Dorsolateral prefrontal cortex (tissue), 120 donors: ENCODE measurements at regions of chr18 and their contacts with region 1.

Region 1: GRCh38 chr18:74546751-74547550 is 12.7 kb downstream of the CNDP1 start:
- DNase-seq: no peak
- H3K4me3 ChIP-seq: no peak overlapping the region
- H3K27ac ChIP-seq: peak overlapping the region in 54 of 59 donors; percentile 26 to 96 (median 73)
- H3K27me3 ChIP-seq: no peaks in the 10 kb centered on the region
- CTCF ChIP-seq: no peak

Region 2: GRCh38 chr18:74196220-74197119 is 350.5 kb before region 1 on chr18:
- intact Hi-C with region 1: loop called (anchors 5 to 10 kb)
- DNase-seq: peak in 3 of 10 donors; percentile 50 to 54 (median 50)
- H3K4me3 ChIP-seq: peak overlapping the region in 41 of 59 donors; percentile 1 to 58 (median 35)
- H3K27ac ChIP-seq: peak overlapping the region in 1 of 59 donors; percentile 29
- H3K27me3 ChIP-seq: no peaks in the 10 kb centered on the region
- CTCF ChIP-seq: peak; percentile 82 to 99 (median 93)

Region 3: DNA sequence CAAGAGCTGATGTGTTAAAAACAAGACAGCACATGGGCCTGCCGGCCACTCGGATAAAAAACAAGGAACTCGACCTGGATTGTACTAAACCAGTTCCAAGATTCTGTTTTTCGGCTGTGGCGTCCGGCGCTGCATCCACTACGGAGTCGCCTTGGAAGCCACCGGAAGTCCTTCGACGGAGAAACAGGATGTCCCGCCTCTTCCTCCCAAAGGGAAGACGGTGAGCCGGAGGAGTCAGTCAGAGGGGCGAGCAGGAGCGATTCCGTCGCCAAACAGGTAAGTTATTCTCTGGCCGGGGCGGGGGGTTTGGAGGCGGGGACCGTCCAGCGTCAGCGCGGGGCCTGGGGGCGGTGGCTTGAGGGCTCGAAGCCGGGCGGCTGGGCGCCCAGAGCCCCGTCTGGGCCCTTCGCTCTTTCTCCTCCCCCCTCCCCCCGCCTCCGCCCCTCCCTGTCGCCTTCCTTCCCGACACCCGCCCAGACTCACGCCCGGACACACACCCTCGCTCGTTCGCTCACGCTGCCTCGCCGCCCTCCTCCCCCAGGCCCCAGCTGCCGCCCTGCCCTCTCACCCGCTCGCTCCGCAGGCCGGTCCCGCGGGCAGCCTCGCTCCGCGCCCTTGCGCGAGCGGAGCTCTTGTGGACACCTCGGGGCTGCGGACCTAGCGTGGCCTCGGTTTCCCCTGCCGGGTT is 50.9 kb after region 1 on chr18 and contains the start of gene ZNF407:
- intact Hi-C with region 1: no loop called
- DNase-seq: peak; percentile 73 to 91 (median 83)
- H3K4me3 ChIP-seq: peak within 1 kb of the TSS; percentile 70 to 100 (median 94)
- H3K27ac ChIP-seq: peak within 1 kb of the TSS; percentile 83 to 100 (median 99)
- H3K27me3 ChIP-seq: no peaks in the 10 kb centered on the region
- CTCF ChIP-seq: no peak
- total RNA-seq, gene ZNF407: 15.2 to 27.4 (median 21.5) TPM

Region 4: GRCh38 chr18:74731097-74731496 is 184.1 kb after region 1 on chr18:
- intact Hi-C with region 1: no loop called
- DNase-seq: no peak
- H3K4me3 ChIP-seq: no peak overlapping the region
- H3K27ac ChIP-seq: no peak overlapping the region
- H3K27me3 ChIP-seq: no peaks in the 10 kb centered on the region
- CTCF ChIP-seq: no peak

Region 5: DNA sequence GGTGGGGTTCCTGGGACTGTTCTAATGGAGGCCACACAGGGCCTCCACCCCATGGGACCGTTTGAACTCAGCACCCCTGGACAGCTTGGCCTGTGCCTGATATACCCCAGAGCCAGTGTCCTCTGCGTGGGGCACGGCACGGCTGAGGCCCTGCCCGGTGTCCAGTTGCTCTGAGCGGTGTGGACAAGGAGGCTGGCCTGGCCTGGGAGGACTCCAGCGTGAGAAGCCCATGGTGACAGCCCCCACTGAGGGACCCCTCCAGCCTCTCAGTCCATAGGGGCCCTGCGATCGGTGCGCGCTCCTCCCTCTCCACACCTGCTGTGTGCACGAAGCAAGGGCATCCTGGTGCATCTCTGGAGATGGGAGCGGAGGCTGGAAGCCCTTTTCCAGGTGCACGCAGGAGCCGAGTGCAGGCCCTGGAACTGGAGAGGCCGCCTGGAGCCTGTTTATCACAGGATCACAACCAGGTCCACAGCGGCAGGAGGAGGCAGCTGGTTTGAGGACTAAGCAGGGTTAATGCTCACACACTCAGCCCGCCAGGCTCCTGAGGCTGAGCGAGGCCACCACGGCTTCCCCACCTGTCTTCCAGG is 541.8 kb after region 1 on chr18:
- intact Hi-C with region 1: no loop called
- DNase-seq: no peak
- H3K4me3 ChIP-seq: no peak overlapping the region
- H3K27ac ChIP-seq: no peak overlapping the region
- H3K27me3 ChIP-seq: no peaks in the 10 kb centered on the region
- CTCF ChIP-seq: no peak